IMR-90 (cell line): ENCODE measurements at regions of chr15 and their contacts with region 1.

Region 1: GRCh38 chr15:100873029-100873677 is 6.5 kb upstream of the ALDH1A3 start:
- DNase-seq: peak; percentile 87
- ATAC-seq: peak; percentile 92
- H3K4me3 ChIP-seq: no peak overlapping the region
- H3K27ac ChIP-seq: no peak overlapping the region
- H3K4me1 ChIP-seq: no peaks in the 10 kb centered on the region
- H3K27me3 ChIP-seq: peaks cover 33% of the 10 kb centered on the region
- CTCF ChIP-seq: peak; percentile 89
- POLR2A ChIP-seq: no peak
- RAD21 ChIP-seq: peak; percentile 86

Region 2: GRCh38 chr15:100627789-100628395 is 245.3 kb before region 1 on chr15:
- CTCF ChIA-PET with region 1: interaction called, 4 read pairs
- POLR2A ChIA-PET with region 1: no interaction called
- dilution Hi-C with region 1: no loop called
- in situ Hi-C with region 1: no loop called
- intact Hi-C with region 1: loop called (anchors 1 kb)
- DNase-seq: peak; percentile 82
- ATAC-seq: peak; percentile 98
- H3K4me3 ChIP-seq: no peak overlapping the region
- H3K27ac ChIP-seq: no peak overlapping the region
- H3K4me1 ChIP-seq: no peaks in the 10 kb centered on the region
- H3K27me3 ChIP-seq: no peaks in the 10 kb centered on the region
- CTCF ChIP-seq: peak; percentile 86
- POLR2A ChIP-seq: 0 out of 2 replicates have a peak, but pooled peaks have one; percentile 23
- RAD21 ChIP-seq: peak; percentile 86

Region 3: DNA sequence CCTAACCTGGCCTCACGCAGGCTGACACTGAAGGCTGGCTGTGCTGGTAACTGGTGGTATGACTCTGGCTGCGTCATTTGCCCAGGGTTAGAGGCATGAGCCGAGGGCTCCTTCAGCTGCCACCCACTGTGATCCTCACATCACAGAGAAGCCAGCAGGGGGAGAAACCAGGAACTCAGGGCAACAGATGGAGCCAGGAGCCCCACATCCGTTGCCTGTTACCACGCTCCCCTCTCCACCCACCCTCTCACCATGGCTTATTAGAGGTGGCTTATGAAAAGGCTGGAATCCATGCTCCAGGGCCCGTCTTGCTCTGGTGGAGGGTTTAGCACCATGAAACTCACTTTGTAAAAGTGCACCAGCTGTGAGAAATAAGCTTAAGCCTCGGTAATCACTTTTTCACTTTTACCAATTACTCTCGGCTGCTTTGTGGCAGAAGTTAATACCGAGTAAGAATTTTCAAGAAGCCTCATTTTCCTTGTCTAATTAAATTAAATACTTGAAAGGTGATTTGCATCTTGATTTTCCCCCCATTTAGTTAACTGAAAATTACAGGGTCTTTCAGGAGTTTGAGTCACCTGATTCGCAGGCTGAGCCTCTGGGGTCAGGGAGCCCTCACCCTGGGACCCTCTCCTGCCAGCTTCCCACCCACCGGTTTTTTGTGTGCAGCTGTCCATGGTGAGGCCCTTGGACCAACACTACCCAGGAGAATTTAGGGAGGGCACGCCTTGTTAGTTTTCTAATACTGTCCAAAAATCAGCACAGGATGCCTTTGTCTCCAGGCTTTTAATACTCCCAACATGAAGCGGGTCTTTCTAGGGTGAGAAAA is 209.9 kb before region 1 on chr15:
- CTCF ChIA-PET with region 1: interaction called, 3 read pairs
- POLR2A ChIA-PET with region 1: no interaction called
- dilution Hi-C with region 1: no loop called
- in situ Hi-C with region 1: loop called (anchors 10 kb)
- intact Hi-C with region 1: no loop called
- DNase-seq: no peak
- ATAC-seq: no peak
- H3K4me3 ChIP-seq: no peak overlapping the region
- H3K27ac ChIP-seq: no peak overlapping the region
- H3K4me1 ChIP-seq: peaks cover 8% of the 10 kb centered on the region; the same call in 1 of the 2 replicates
- H3K27me3 ChIP-seq: no peaks in the 10 kb centered on the region; the same call in 1 of the 2 replicates
- CTCF ChIP-seq: 0 out of 2 replicates have a peak, but pooled peaks have one; percentile 19
- POLR2A ChIP-seq: no peak
- RAD21 ChIP-seq: no peak

Region 4: GRCh38 chr15:100671858-100672543 is 201.2 kb before region 1 on chr15:
- CTCF ChIA-PET with region 1: interaction called, 15 read pairs
- POLR2A ChIA-PET with region 1: no interaction called
- dilution Hi-C with region 1: no loop called
- in situ Hi-C with region 1: loop called (anchors 10 kb)
- intact Hi-C with region 1: loop called (anchors 1 kb)
- DNase-seq: peak; percentile 53
- ATAC-seq: peak; percentile 78
- H3K4me3 ChIP-seq: no peak overlapping the region
- H3K27ac ChIP-seq: peak overlapping the region; percentile 23
- H3K4me1 ChIP-seq: peaks cover 4% of the 10 kb centered on the region; the same call in 1 of the 2 replicates
- H3K27me3 ChIP-seq: no peaks in the 10 kb centered on the region
- CTCF ChIP-seq: peak; percentile 75
- POLR2A ChIP-seq: 0 out of 2 replicates have a peak, but pooled peaks have one; percentile 26
- RAD21 ChIP-seq: peak; percentile 84

Region 5: DNA sequence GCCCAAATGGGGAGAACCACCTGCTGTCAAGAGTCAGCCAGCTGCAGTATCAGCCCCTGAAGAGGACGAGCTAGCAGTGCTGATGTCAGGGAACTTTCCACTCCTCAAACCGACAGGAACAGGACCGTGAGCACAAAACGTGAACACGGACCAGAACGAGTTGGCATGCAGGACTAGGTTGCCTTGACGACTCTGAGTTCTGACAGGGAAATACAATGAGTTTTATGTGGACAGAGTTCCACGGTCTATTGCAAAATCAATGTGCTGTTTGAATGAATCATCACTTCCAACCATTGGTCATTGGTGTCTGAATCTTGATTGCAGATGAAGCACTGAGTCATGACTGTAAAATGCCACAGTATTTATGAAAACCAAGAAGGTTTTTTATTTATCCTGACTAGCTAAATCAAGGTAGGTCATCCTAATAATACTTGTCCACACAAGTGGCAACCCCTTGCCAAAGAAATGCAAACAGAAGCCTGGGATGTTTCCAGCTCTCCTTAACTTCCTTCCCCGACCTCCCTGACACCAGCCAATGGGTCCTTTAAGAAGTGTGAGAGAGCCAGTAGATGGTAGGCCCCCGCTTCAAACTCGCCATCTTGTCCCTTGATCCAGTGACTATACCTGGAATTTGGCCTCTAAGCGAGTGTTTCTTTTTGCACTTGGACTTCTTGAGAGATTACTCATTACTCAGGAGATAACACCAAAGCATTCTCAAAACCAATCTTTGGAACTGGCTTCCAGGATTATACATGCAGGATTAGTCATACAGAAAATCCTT is 151.2 kb before region 1 on chr15:
- CTCF ChIA-PET with region 1: interaction called, 5 read pairs
- POLR2A ChIA-PET with region 1: no interaction called
- dilution Hi-C with region 1: no loop called
- in situ Hi-C with region 1: no loop called
- intact Hi-C with region 1: loop called (anchors 1 kb)
- DNase-seq: peak; percentile 100
- ATAC-seq: peak; percentile 59
- H3K4me3 ChIP-seq: no peak overlapping the region
- H3K27ac ChIP-seq: peak overlapping the region; percentile 68
- H3K4me1 ChIP-seq: peaks cover 38% of the 10 kb centered on the region
- H3K27me3 ChIP-seq: no peaks in the 10 kb centered on the region
- CTCF ChIP-seq: no peak
- POLR2A ChIP-seq: no peak
- RAD21 ChIP-seq: 0 out of 2 replicates have a peak, but pooled peaks have one; percentile 23

Region 6: GRCh38 chr15:100759698-100760356 is 113.3 kb before region 1 on chr15:
- CTCF ChIA-PET with region 1: interaction called, 3 read pairs
- POLR2A ChIA-PET with region 1: no interaction called
- dilution Hi-C with region 1: no loop called
- in situ Hi-C with region 1: no loop called
- intact Hi-C with region 1: loop called (anchors 1 kb)
- DNase-seq: peak; percentile 76
- ATAC-seq: peak; percentile 86
- H3K4me3 ChIP-seq: no peak overlapping the region
- H3K27ac ChIP-seq: peak overlapping the region; percentile 51; the same call in 1 of the 2 replicates
- H3K4me1 ChIP-seq: peaks cover 12% of the 10 kb centered on the region; the same call in 1 of the 2 replicates
- H3K27me3 ChIP-seq: no peaks in the 10 kb centered on the region
- CTCF ChIP-seq: no peak
- POLR2A ChIP-seq: no peak
- RAD21 ChIP-seq: no peak

Region 7: GRCh38 chr15:101008158-101009139 is 135.3 kb after region 1 on chr15:
- CTCF ChIA-PET with region 1: interaction called, 6 read pairs
- POLR2A ChIA-PET with region 1: no interaction called
- dilution Hi-C with region 1: no loop called
- in situ Hi-C with region 1: no loop called
- intact Hi-C with region 1: loop called (anchors 1 kb)
- DNase-seq: peak; percentile 66
- ATAC-seq: peak; percentile 95
- H3K4me3 ChIP-seq: peak overlapping the region; percentile 33; the same call in 1 of the 2 replicates
- H3K27ac ChIP-seq: peak overlapping the region; percentile 41; the same call in 1 of the 2 replicates
- H3K4me1 ChIP-seq: no peaks in the 10 kb centered on the region
- H3K27me3 ChIP-seq: no peaks in the 10 kb centered on the region
- CTCF ChIP-seq: peak; percentile 77
- POLR2A ChIP-seq: no peak
- RAD21 ChIP-seq: peak; percentile 53